Common myeloid progenitor, CD34-positive (primary cell): ENCODE measurements at regions of chr15 and their contacts with region 1.

Region 1: DNA sequence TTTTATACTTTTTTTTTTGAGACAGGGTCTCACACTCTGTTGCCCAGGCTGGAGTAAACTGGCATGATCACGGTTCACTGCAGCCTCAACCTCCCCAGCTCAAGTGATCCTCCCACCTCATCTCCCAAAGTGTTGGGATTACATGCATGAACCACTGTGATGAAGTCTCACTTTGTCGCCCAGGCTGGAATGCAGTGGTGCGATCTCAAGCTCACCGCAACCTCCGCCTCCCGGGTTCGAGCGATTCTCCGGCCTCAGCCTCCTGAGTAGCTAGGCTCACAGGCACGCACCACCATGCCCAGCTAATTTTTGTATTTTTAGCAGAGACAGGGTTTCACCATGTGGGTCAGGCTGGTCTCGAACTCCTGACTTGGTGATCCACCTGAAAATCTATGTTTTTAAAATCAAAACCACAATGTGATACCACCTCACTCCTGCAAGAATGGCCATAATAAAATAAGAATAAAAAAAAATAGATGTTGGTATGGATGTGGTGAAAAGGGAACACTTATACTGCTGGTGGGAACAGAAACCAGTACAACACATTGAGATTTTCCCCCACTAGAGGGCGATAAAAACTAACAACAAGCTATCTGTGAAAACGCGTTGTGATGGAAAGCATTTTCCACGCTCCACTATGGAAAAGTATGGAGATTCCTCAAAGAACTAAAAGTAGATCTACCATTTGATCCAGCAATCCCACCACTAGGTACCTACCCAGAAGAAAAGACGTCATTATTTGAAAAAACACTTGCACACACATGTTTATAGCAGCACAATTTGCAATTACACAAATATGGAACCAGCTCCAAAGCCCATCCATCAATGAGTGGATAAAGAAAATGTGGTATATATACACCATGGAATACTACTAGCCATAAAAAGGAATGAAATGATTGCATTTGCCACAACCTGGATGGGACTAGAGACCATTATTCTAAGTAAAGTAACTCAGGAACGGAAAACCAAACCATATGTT is 26.8 kb upstream of the OCA2 start:
- DNase-seq: peak; percentile 44 to 69 (median 62)
- H3K4me3 ChIP-seq: no peak overlapping the region
- H3K27ac ChIP-seq: no peak overlapping the region
- H3K4me1 ChIP-seq: no peaks in the 10 kb centered on the region
- H3K27me3 ChIP-seq: no peaks in the 10 kb centered on the region

Region 2: GRCh38 chr15:27993996-27994780 is 131.8 kb before region 1 on chr15:
- CTCF ChIA-PET with region 1: no interaction called
- POLR2A ChIA-PET with region 1: no interaction called
- DNase-seq: no peak
- H3K4me3 ChIP-seq: no peak overlapping the region
- H3K27ac ChIP-seq: no peak overlapping the region
- H3K4me1 ChIP-seq: no peaks in the 10 kb centered on the region
- H3K27me3 ChIP-seq: no peaks in the 10 kb centered on the region

Region 3: DNA sequence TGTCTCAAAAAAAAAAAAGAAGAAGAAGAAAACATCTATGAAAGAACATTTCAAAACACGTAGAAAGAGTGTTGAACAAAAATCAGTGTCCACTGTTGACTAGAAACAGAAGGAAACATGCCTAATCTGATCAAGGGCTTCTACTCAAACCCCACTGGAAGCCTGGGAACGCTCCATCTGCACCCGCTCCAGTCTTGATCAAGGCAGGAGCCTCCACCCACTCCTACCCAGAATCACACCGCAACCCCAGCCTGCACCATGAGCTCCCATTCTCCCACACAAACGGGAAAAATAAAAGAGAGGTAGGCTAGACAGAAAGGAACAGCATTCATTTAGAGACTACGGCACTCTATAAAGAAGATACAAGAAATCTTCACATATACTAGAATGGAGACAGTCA is 14.1 kb after region 1 on chr15:
- CTCF ChIA-PET with region 1: interaction called, 16 read pairs
- POLR2A ChIA-PET with region 1: no interaction called
- DNase-seq: no peak
- H3K4me3 ChIP-seq: no peak overlapping the region
- H3K27ac ChIP-seq: no peak overlapping the region
- H3K4me1 ChIP-seq: peaks cover 0 to 5% (median 1%) of the 10 kb centered on the region in 4 experiments
- H3K27me3 ChIP-seq: no peaks in the 10 kb centered on the region